Posterior vena cava (tissue), 2 donors: ENCODE measurements at regions of chr10 and their contacts with region 1.

Region 1: DNA sequence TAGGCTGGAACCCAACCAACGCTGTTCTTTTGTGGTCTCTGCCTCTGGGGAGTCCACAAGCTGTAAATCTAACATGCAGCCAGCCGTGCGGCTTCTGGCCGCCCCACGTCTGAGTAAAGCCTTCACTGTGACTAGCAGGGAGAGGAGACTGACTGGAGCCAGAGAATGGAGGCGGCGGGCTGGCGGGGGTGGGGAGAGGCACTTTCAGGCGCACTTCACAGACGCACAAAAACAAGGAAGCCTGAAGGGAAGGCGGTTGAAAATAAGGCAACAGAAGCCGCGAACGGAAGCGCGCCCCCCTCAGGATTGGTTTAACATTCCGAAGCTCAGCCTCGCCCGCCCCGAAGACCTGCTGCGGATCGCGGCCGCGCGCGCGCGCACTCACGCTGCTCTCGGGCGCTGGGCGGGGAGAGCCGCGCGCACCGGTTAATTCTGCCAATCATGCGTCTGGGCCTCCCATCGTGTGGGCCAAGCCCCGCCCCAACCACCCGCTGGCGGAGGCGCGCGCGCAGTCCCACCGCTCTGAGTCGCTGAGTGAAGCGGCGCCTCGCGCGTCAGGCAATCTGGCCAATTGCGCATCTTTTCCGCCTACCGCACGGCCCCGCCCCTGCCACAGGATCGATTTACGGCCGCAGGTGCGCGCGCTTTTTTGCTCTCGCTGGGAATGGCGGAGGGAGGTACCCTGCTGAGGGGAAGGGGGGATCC is at the start of gene SFR1:
- DNase-seq: peak; percentile 100
- total RNA-seq, gene SFR1: 7.6 to 9.2 TPM

Region 2: DNA sequence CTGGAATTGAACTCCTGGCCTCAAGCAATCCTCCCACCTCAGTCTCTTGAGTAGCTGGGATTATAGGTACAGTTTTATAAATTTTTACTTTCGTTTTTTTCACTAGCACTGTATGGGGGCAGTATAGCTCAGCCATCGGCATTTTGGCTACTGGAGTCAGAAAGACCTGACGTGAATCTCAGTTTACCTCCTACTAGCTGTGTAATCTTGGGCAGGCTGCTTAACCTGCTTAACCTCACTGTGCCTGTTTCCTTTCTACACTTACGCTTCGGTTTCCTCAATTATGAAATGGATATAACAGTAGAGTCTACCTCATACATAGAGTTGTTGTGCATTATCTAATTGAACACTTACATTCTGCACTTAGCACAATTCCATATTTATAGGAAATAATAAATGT is 220.4 kb before region 1 on chr10:
- intact Hi-C with region 1: loop called in 1 of 2 experiments (anchors 10 kb)
- DNase-seq: no peak

Region 3: DNA sequence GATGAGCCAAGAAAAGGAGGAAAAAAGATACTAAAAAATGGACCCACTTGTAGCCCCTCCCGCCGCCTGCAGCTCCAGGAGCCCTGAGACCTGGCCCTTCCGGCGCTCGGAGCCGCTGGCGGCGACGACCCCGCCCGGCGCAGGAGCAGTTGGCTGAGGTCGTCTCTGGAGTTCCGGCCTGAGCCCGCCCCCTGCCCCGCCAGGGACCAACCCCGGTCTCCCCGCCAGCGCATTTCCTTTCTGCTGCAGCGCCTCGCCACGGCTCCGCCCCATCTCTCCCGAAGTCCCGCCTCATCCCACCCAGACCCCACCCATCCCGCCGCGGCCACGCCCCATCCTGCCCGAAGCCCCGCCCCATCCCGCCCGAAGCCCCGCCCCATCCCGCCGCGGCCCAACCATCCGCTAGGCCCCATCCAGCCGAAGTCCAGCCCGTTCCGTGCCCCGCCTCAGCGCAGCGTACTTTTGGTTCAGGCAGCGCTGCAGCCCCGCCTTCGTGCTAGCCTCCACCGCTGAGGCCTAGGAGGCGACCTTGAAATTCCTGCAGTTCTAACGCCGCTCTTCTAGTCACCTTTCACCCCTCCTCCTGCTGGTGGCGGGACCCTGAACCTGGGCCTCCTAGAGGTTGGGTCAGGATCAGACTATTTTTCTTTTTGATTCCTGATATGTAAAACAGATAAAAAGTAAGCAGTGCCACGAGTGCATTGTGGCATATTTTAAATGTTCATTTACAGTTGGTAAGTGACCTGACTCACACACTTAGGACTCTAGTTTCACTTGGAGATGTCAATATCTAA is 203.4 kb before region 1 on chr10 and contains the start of gene STN1:
- intact Hi-C with region 1: no loop called
- DNase-seq: peak; percentile 99
- total RNA-seq, gene STN1: 18.2 to 18.6 TPM

Region 4: DNA sequence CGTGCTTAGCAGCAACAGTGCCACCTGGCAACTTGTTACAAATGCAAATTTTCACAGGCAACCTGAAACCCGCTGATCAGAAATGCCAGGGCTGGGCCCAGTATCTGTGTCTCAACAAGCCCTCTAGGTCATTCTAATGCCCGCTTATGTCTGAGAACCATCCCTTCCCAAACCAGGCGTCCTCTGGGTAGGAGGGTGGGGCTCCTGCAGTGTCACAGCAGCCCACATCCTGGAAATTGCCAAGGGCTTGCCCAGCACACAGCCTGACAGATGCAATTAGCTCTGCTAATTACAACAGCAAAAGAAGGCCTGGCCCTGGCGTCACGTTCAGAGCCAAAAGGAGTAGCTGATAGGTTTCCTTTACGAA is 200.7 kb after region 1 on chr10:
- intact Hi-C with region 1: no loop called
- DNase-seq: peak; percentile 79